HepG2 (cell line): ENCODE measurements at regions of chrX and their contacts with region 1.

Region 1: GRCh38 chrX:50905334-50905733 is 5.2 kb upstream of the BMP15 start:
- DNase-seq: peak; percentile 4
- ATAC-seq: no peak
- H3K4me3 ChIP-seq: no peak overlapping the region
- H3K27ac ChIP-seq: no peak overlapping the region
- H3K4me1 ChIP-seq: no peaks in the 10 kb centered on the region
- H3K27me3 ChIP-seq: no peaks in the 10 kb centered on the region
- CTCF ChIP-seq: peak; percentile 28
- EP300 ChIP-seq: no peak
- POLR2A ChIP-seq: no peak
- RAD21 ChIP-seq: no peak

Region 2: GRCh38 chrX:50586407-50586806 is 318.9 kb before region 1 on chrX:
- CTCF ChIA-PET with region 1: no interaction called
- POLR2A ChIA-PET with region 1: no interaction called
- in situ Hi-C with region 1: no loop called
- intact Hi-C with region 1: no loop called
- DNase-seq: no peak
- ATAC-seq: no peak
- H3K4me3 ChIP-seq: no peak overlapping the region
- H3K27ac ChIP-seq: no peak overlapping the region
- H3K4me1 ChIP-seq: no peaks in the 10 kb centered on the region
- H3K27me3 ChIP-seq: no peaks in the 10 kb centered on the region
- CTCF ChIP-seq: no peak
- EP300 ChIP-seq: no peak
- POLR2A ChIP-seq: no peak
- RAD21 ChIP-seq: no peak

Region 3: DNA sequence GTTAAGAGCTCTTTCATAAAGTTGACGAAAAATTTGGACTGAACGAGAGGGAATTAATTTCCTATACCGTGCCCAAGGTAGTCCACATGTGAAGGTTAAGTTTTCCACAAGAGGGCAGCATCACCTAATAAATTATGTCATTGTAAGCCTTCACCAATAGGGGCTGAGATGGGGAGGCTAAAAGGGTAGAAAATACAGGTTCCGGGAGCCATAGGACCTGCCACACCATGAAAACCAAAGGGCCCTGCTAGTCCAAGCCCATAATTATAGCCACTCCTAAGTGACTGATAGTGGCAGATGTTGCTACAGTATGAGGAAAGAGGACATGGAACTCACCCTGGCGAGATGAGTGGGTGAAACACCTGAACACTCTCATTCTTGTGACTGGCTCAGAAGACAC is 213.5 kb before region 1 on chrX:
- CTCF ChIA-PET with region 1: interaction called, 10 read pairs
- POLR2A ChIA-PET with region 1: no interaction called
- in situ Hi-C with region 1: no loop called
- intact Hi-C with region 1: loop called (anchors 1 kb)
- DNase-seq: peak; percentile 38
- ATAC-seq: peak; percentile 87
- H3K4me3 ChIP-seq: no peak overlapping the region
- H3K27ac ChIP-seq: no peak overlapping the region
- H3K4me1 ChIP-seq: no peaks in the 10 kb centered on the region
- H3K27me3 ChIP-seq: no peaks in the 10 kb centered on the region
- CTCF ChIP-seq: peak; percentile 56
- EP300 ChIP-seq: no peak
- POLR2A ChIP-seq: no peak
- RAD21 ChIP-seq: 0 out of 2 replicates have a peak, but pooled peaks have one; percentile 16

Region 4: DNA sequence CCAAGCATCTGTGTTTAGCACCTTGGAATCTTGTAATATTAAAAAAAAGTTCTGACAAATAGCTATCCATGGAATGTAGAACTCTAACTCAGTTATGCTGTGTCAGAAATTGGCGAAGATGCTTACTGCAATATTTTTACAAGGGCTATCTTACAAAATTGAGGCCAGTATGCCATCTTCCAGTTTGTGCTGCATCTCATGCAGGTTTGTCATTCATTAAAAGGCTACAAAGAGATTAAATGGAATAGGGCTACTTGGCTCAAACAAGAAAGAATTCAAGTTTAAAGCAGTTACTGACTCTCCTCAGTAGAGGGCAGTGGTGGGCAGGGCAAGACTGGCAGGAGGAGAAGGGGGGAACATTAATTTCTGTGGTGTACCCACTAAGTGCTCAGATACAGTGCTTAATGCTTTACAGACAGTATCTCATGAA is 157.8 kb before region 1 on chrX:
- CTCF ChIA-PET with region 1: interaction called, 18 read pairs
- POLR2A ChIA-PET with region 1: no interaction called
- in situ Hi-C with region 1: loop called (anchors 5 kb)
- intact Hi-C with region 1: loop called (anchors 2 kb)
- DNase-seq: peak; percentile 3
- ATAC-seq: no peak
- H3K4me3 ChIP-seq: no peak overlapping the region
- H3K27ac ChIP-seq: no peak overlapping the region
- H3K4me1 ChIP-seq: no peaks in the 10 kb centered on the region
- H3K27me3 ChIP-seq: no peaks in the 10 kb centered on the region
- CTCF ChIP-seq: peak; percentile 64
- EP300 ChIP-seq: no peak
- POLR2A ChIP-seq: no peak
- RAD21 ChIP-seq: no peak

Region 5: GRCh38 chrX:50779694-50780093 is 125.6 kb before region 1 on chrX:
- CTCF ChIA-PET with region 1: no interaction called
- POLR2A ChIA-PET with region 1: no interaction called
- in situ Hi-C with region 1: no loop called
- intact Hi-C with region 1: no loop called
- DNase-seq: no peak
- ATAC-seq: no peak
- H3K4me3 ChIP-seq: no peak overlapping the region
- H3K27ac ChIP-seq: no peak overlapping the region
- H3K4me1 ChIP-seq: no peaks in the 10 kb centered on the region
- H3K27me3 ChIP-seq: no peaks in the 10 kb centered on the region
- CTCF ChIP-seq: no peak
- EP300 ChIP-seq: no peak
- POLR2A ChIP-seq: no peak
- RAD21 ChIP-seq: no peak